Mammary epithelial cell (primary cell): ENCODE measurements at regions of chr2 and their contacts with region 1.

Region 1: DNA sequence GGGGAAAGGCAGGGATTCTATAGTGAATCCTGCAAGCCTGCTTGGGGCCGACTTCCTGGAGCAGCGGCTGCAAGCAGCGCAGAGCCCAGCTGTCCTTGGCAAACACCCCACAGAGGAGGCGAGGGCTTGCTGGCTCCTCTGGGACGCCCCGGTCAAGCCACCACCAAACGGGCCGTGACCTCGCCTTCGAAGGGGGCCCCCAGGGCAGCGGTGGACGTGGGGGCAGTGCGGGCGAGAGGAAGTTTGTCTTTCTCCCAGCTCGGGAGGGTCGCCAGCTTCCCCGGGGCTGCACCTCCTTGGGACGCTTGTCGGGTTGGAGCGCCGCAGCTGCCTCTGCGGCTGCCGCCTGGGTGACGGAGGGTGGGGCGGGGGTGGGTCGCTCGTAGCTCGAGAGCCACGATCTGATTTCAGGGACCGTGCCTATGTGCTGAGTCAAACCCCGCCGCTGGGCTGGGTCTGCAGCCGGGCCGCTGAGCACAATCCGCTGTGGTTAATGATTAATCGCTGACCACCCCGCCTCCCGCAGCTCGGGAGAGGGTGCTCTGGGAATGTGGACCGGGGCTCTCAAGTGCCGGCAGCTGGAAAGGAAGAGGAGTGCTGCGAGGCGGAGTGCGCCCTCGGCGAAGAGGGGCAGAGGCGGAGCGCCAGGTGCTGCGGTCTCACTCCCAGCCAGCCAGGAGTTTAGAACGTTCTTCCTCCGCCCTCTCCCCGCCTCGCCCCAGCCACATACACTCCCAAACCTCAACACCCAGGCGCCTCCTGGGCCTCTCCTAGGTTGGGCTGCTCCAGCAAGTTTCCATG is at the start of gene GPR39:
- DNase-seq: peak; percentile 99
- H3K4me3 ChIP-seq: peak within 1 kb of the TSS; percentile 52 to 73 (median 54)
- H3K27ac ChIP-seq: peak within 1 kb of the TSS; percentile 92
- H3K4me1 ChIP-seq: peaks cover 58% of the 10 kb centered on the region
- H3K27me3 ChIP-seq: no peaks in the 10 kb centered on the region
- CTCF ChIP-seq: peak in 1 of 2 donors; percentile 3
- total RNA-seq, gene GPR39: 5.7 to 10.3 TPM

Region 2: DNA sequence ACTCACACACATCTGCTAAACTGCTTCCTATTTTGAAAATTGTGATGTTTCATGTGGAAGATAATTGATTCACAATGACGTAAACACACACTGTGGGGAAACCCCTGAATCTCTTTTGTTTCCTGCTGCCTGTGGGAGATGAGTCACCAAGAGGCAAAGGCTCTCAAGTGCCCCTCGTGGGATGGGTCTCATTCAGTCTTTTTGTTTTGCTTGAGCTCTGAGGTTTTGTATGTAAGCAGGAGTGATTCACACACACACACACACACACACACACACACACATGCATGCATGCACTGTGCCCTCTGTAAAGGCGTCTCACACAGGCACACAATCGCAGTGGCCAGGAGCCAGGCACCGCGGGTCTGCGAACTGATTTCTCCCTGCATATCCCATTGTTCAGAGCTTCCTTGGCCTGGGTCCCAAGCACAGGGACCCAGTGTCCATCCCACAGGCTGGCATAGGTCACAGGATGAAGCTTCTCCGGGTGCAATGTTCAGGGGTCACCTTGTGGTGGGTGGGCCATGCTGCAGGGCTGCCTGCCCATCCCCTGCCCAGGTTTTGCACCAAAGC is 1591.7 kb before region 1 on chr2:
- CTCF ChIA-PET with region 1: no interaction called
- dilution Hi-C with region 1: no loop called
- in situ Hi-C with region 1: no loop called
- intact Hi-C with region 1: loop called (anchors 10 kb)
- DNase-seq: peak; percentile 100
- H3K4me3 ChIP-seq: no peak overlapping the region
- H3K27ac ChIP-seq: peak overlapping the region; percentile 79
- H3K4me1 ChIP-seq: peaks cover 71% of the 10 kb centered on the region
- H3K27me3 ChIP-seq: no peaks in the 10 kb centered on the region
- CTCF ChIP-seq: no peak

Region 3: GRCh38 chr2:132366421-132367180 is 49.7 kb before region 1 on chr2:
- CTCF ChIA-PET with region 1: no interaction called
- dilution Hi-C with region 1: no loop called
- in situ Hi-C with region 1: no loop called
- intact Hi-C with region 1: no loop called
- DNase-seq: no peak
- H3K4me3 ChIP-seq: no peak overlapping the region
- H3K27ac ChIP-seq: no peak overlapping the region
- H3K4me1 ChIP-seq: no peaks in the 10 kb centered on the region
- H3K27me3 ChIP-seq: no peaks in the 10 kb centered on the region
- CTCF ChIP-seq: no peak

Region 4: DNA sequence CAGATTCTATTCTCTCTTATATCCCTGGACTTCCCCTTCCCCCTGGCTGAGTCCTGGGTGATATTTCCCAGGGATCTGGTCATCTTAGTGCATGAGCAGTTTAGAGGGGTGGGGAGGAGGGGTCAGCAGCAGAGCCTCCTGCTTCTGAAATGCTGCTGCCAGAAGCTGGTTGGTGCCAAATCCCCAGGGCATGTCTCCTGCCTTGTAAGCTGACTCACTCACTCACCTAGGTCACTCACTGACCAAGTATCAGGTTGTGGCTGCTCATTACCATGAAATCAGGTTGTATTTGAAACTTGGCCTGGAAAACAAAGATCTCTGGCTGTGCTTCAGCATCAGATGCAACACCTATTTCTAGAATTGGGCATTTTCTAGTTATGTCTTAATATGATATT is 14.6 kb after region 1 on chr2:
- CTCF ChIA-PET with region 1: no interaction called
- dilution Hi-C with region 1: no loop called
- in situ Hi-C with region 1: no loop called
- intact Hi-C with region 1: loop called (anchors 2 kb)
- DNase-seq: peak; percentile 95
- H3K4me3 ChIP-seq: no peak overlapping the region
- H3K27ac ChIP-seq: peak overlapping the region; percentile 65
- H3K4me1 ChIP-seq: peaks cover 29% of the 10 kb centered on the region
- H3K27me3 ChIP-seq: no peaks in the 10 kb centered on the region
- CTCF ChIP-seq: no peak

Region 5: DNA sequence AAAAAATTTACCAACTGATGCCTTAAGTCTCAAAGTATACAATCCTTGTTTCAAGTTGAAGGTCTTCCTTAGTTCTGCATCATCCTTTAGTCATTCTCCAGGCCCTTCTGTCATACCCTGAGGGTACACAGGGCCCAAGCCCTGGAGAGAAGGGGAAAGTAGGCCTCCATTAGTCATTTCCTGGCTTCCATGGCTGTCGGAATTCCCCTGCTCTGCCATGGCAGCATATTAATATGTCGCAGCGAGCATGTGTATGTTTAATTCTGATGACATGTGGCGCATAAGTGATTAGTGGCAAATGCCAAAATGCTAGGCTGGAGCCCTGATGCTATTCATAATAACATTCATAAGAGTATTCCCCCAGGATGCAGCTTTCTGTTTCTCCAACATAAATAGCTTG is 22.4 kb after region 1 on chr2:
- CTCF ChIA-PET with region 1: no interaction called
- dilution Hi-C with region 1: no loop called
- in situ Hi-C with region 1: no loop called
- intact Hi-C with region 1: loop called (anchors 1 kb)
- DNase-seq: peak; percentile 98
- H3K4me3 ChIP-seq: no peak overlapping the region
- H3K27ac ChIP-seq: peak overlapping the region; percentile 92
- H3K4me1 ChIP-seq: peaks cover 41% of the 10 kb centered on the region
- H3K27me3 ChIP-seq: no peaks in the 10 kb centered on the region
- CTCF ChIP-seq: no peak